ENCODE measurements at regions of chrX and their contacts with region 1.

Region 1: GRCh38 chrX:118345401-118346257 is at the start of gene WDR44:
- DNase-seq: peak; percentile 89
- H3K4me3 Mint-ChIP-seq: peak within 1 kb of the TSS; percentile 99
- H3K27ac Mint-ChIP-seq: peak within 1 kb of the TSS; percentile 99
- H3K4me1 Mint-ChIP-seq: peaks cover 39% of the 10 kb centered on the region
- H3K27me3 Mint-ChIP-seq: peaks cover 3% of the 10 kb centered on the region
- total RNA-seq, gene WDR44: 10.0 and 11.3 TPM in 2 replicates

Region 2: GRCh38 chrX:117094149-117094548 is 1251.5 kb before region 1 on chrX:
- intact Hi-C with region 1: loop called (anchors 10 kb)
- DNase-seq: no peak
- H3K4me3 Mint-ChIP-seq: no peak overlapping the region
- H3K27ac Mint-ChIP-seq: no peak overlapping the region
- H3K4me1 Mint-ChIP-seq: no peaks in the 10 kb centered on the region
- H3K27me3 Mint-ChIP-seq: no peaks in the 10 kb centered on the region

Region 3: GRCh38 chrX:118420462-118420861 is 74.8 kb after region 1 on chrX:
- intact Hi-C with region 1: loop called (anchors 5 kb)
- DNase-seq: no peak
- H3K4me3 Mint-ChIP-seq: no peak overlapping the region
- H3K27ac Mint-ChIP-seq: no peak overlapping the region
- H3K4me1 Mint-ChIP-seq: peaks cover 9% of the 10 kb centered on the region
- H3K27me3 Mint-ChIP-seq: no peaks in the 10 kb centered on the region

Region 4: GRCh38 chrX:118495061-118495921 is 149.7 kb after region 1 on chrX and contains the start of gene DOCK11:
- intact Hi-C with region 1: loop called (anchors 1 kb)
- DNase-seq: peak; percentile 75
- H3K4me3 Mint-ChIP-seq: peak within 1 kb of the TSS; percentile 98
- H3K27ac Mint-ChIP-seq: peak within 1 kb of the TSS; percentile 97
- H3K4me1 Mint-ChIP-seq: peaks cover 30% of the 10 kb centered on the region
- H3K27me3 Mint-ChIP-seq: no peaks in the 10 kb centered on the region
- total RNA-seq, gene DOCK11: 28.6 and 30.1 TPM in 2 replicates

Region 5: GRCh38 chrX:118528071-118528737 is 182.6 kb after region 1 on chrX:
- intact Hi-C with region 1: loop called (anchors 2 kb)
- DNase-seq: peak; percentile 49
- H3K4me3 Mint-ChIP-seq: peak overlapping the region; percentile 83
- H3K27ac Mint-ChIP-seq: peak overlapping the region; percentile 97
- H3K4me1 Mint-ChIP-seq: peaks cover 73% of the 10 kb centered on the region
- H3K27me3 Mint-ChIP-seq: no peaks in the 10 kb centered on the region

Region 6: GRCh38 chrX:118536687-118537461 is 191.2 kb after region 1 on chrX:
- intact Hi-C with region 1: loop called (anchors 2 kb)
- DNase-seq: peak; percentile 9
- H3K4me3 Mint-ChIP-seq: peak overlapping the region; percentile 72
- H3K27ac Mint-ChIP-seq: peak overlapping the region; percentile 94
- H3K4me1 Mint-ChIP-seq: peaks cover 55% of the 10 kb centered on the region
- H3K27me3 Mint-ChIP-seq: no peaks in the 10 kb centered on the region

Region 7: GRCh38 chrX:118603981-118604380 is 258.4 kb after region 1 on chrX:
- intact Hi-C with region 1: loop called (anchors 5 kb)
- DNase-seq: peak; percentile 0
- H3K4me3 Mint-ChIP-seq: no peak overlapping the region
- H3K27ac Mint-ChIP-seq: no peak overlapping the region
- H3K4me1 Mint-ChIP-seq: peaks cover 10% of the 10 kb centered on the region
- H3K27me3 Mint-ChIP-seq: no peaks in the 10 kb centered on the region

Measured in activated T-helper 1 cell treated with anti-CD3 and anti-CD28 coated beads, Interleukin-12 subunit alpha, Interleukin-12 subunit beta, Interleukin-2, Interleukin-4 antibody, amounts not matched to agents 30 ng/mL and 10 ng/mL and 1 ng/mL, durations not matched to agents 14 hours and 24 hours and 36 hours (primary cell).